Activated naive CD8-positive, alpha-beta T cell treated with anti-CD3 and anti-CD28 coated beads, Interleukin-2, amount 10 ng/mL, durations not matched to agents 7 days and 5 days (primary cell): ENCODE measurements at regions of chr20 and their contacts with region 1.

Region 1: GRCh38 chr20:63980806-63981728 is at the start of gene PRPF6:
- DNase-seq: peak; percentile 98
- ATAC-seq: peak; percentile 62
- H3K4me3 Mint-ChIP-seq: peak within 1 kb of the TSS; percentile 96
- H3K27ac Mint-ChIP-seq: peak within 1 kb of the TSS; percentile 98
- H3K4me1 Mint-ChIP-seq: peaks cover 51% of the 10 kb centered on the region
- H3K27me3 Mint-ChIP-seq: no peaks in the 10 kb centered on the region
- total RNA-seq, gene PRPF6: 76.7 to 78.4 TPM

Region 2: GRCh38 chr20:63686492-63687321 is 294.4 kb before region 1 on chr20:
- POLR2A ChIA-PET with region 1: no interaction called
- DNase-seq: no peak
- ATAC-seq: no peak
- H3K4me3 Mint-ChIP-seq: no peak overlapping the region
- H3K27ac Mint-ChIP-seq: no peak overlapping the region
- H3K4me1 Mint-ChIP-seq: no peaks in the 10 kb centered on the region
- H3K27me3 Mint-ChIP-seq: no peaks in the 10 kb centered on the region

Region 3: DNA sequence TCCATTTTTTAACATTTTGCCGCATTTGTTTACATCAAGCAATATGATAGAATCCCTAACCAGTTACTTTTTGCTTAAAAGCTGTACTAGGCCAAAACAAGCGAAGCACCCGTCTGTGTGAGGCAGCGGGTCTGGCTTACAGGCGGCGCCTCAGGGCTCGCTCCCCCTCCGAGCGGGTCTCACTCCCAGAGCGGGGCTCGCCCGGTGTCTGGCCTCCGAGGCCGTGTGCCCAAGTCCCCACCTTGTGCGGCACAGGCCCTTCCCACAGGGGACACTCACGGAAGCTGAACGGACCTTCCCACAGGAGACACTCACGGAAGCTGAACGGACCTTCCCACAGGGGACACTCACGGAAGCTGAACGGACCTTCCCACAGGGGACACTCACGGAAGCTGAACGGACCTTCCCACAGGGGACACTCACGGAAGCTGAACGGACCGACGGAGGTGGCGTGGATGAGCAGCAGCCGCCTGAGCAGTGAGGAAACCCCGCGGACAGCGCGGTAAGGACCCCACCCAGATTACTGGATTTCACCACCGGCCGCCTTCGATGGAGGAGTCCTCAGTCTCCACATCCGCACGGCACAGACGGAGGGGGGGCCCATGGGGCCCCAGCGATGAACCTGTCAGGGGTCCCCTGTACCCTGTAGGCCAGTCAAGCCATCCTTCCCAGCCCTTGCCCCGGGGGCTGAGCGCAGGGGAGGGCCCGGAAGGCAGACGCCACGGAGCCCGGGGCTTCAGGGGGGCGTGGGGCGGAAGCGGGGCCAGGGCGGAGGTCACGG is 173.2 kb before region 1 on chr20:
- POLR2A ChIA-PET with region 1: no interaction called
- DNase-seq: no peak
- ATAC-seq: no peak
- H3K4me3 Mint-ChIP-seq: no peak overlapping the region
- H3K27ac Mint-ChIP-seq: no peak overlapping the region
- H3K4me1 Mint-ChIP-seq: peaks cover 5% of the 10 kb centered on the region
- H3K27me3 Mint-ChIP-seq: peaks cover 6% of the 10 kb centered on the region

Region 4: DNA sequence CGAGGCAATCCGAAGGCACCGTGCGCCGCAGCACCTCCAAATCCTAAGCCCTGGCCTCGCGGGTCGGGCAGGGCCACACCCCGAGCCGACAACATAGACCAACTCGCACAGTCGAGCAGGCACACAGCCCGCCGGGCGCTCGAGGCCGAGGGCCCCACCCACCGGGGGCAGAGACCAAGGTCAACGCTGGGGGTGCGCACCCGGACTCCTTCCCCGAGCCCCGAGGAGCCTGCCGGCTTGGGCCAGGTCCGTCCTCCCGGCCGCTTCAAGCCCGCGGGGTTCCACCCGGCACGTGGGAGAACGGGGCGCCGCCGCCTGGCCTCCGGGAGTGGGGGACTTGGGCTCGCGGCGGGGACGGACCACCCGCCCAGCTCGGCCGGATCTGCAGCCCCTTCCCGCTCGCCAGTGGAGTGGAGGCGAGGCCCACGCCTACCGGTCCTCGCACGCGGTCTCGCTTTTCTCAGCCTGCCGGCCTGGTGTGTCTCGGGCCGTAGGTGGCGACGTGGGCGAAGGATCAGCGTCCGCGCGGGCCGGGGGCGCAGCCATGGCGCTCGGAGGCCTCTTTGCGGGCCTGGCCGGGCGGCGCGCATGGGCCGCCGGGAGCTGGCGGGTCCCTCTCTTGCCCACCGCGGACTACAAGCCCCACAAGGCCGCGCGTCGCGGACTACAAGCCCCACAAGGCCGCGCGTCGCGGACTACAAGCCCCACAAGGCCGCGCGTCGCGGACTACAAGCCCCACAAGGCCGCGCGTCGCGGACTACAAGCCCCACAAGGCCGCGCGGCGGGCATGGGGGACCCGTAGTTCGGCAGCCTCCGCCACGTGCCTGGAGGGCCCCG is 25.0 kb before region 1 on chr20 and contains the start of gene UCKL1:
- POLR2A ChIA-PET with region 1: interaction called, 14 read pairs
- DNase-seq: peak; percentile 93
- ATAC-seq: peak; percentile 79
- H3K4me3 Mint-ChIP-seq: peak within 1 kb of the TSS; percentile 83
- H3K27ac Mint-ChIP-seq: peak within 1 kb of the TSS; percentile 87
- H3K4me1 Mint-ChIP-seq: peaks cover 24% of the 10 kb centered on the region
- H3K27me3 Mint-ChIP-seq: no peaks in the 10 kb centered on the region
- total RNA-seq, gene UCKL1: 45.0 to 48.4 TPM

Region 5: GRCh38 chr20:64062596-64063388 is 81.7 kb after region 1 on chr20 and contains the start of gene TCEA2:
- POLR2A ChIA-PET with region 1: interaction called, 16 read pairs
- DNase-seq: peak; percentile 96
- ATAC-seq: peak; percentile 76
- H3K4me3 Mint-ChIP-seq: peak within 1 kb of the TSS; percentile 95
- H3K27ac Mint-ChIP-seq: peak within 1 kb of the TSS; percentile 89
- H3K4me1 Mint-ChIP-seq: peaks cover 43% of the 10 kb centered on the region
- H3K27me3 Mint-ChIP-seq: no peaks in the 10 kb centered on the region
- total RNA-seq, gene TCEA2: 65.3 to 74.9 TPM

Region 6: DNA sequence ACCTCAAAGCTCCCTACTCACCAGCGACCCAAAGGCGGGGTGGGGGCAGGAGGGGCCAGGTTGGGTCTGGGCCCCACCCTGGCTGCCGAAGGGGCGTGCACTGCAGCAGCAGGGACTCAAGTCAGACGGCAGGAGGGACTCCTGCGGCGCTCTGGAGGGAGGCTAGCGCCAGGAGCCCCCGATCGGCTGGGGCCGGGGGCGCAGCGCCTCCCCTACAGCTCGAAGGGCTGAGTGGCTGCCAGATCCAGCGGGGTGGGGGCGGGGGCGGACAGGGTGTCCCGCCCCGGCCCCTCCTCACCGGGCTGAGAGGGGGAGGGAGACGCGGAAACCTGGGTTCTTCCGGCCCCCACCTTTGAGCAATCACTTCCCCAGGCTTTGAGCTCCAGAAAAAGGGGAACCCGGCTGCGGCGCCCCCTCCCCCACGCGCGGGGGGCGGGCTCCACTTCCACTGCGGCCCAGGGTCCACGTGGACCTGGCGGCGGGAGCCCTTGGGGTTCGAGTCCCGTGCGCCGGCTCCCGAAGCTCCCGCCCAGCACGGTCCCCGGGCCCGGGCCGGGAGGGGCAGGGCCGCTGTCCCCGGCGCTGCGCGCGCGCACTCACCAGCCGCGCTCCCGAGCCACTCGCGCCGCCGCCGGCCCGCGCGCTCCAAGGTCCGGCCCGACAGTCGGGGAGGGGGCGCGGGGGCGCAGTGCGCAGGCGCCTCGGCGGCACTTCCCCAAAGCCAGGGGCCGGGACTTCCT is 98.4 kb after region 1 on chr20 and contains the start of gene RGS19:
- POLR2A ChIA-PET with region 1: interaction called, 17 read pairs
- DNase-seq: peak; percentile 87
- ATAC-seq: peak; percentile 27
- H3K4me3 Mint-ChIP-seq: peak within 1 kb of the TSS; percentile 96
- H3K27ac Mint-ChIP-seq: peak within 1 kb of the TSS; percentile 94
- H3K4me1 Mint-ChIP-seq: peaks cover 35% of the 10 kb centered on the region
- H3K27me3 Mint-ChIP-seq: peaks cover 9% of the 10 kb centered on the region
- total RNA-seq, gene RGS19: 95.1 to 106 TPM

Region 7: DNA sequence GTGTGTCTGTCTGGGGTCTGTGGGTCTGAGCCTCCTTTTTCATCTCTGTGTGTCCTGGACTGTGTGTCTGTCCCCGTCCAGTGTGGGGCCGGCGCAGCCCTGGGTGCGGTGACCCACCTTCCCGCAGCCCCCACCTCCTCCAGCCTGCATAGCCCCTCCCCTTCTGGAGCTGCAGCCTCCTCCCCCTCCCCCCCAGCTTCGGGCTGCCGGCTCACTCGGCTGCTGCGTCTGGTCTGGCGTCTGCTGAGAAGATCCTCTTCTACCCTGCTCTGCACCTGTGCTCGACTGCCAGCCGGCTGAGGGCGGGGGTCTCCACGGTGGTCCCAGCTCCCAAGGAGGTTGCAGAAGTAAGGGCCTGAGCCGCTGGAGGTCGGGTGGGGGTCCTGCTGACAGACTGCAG is 110.7 kb after region 1 on chr20:
- POLR2A ChIA-PET with region 1: no interaction called
- DNase-seq: no peak
- ATAC-seq: no peak
- H3K4me3 Mint-ChIP-seq: no peak overlapping the region
- H3K27ac Mint-ChIP-seq: peak overlapping the region; percentile 40
- H3K4me1 Mint-ChIP-seq: peaks cover 1% of the 10 kb centered on the region
- H3K27me3 Mint-ChIP-seq: peaks cover 1% of the 10 kb centered on the region

Region 8: GRCh38 chr20:64279826-64280459 is 298.9 kb after region 1 on chr20:
- POLR2A ChIA-PET with region 1: no interaction called
- DNase-seq: no peak
- ATAC-seq: peak; percentile 65
- H3K4me3 Mint-ChIP-seq: no peak overlapping the region
- H3K27ac Mint-ChIP-seq: no peak overlapping the region
- H3K4me1 Mint-ChIP-seq: peaks cover 18% of the 10 kb centered on the region
- H3K27me3 Mint-ChIP-seq: peaks cover 4% of the 10 kb centered on the region